ENCODE measurements at regions of chr16 and their contacts with region 1.

Region 1: DNA sequence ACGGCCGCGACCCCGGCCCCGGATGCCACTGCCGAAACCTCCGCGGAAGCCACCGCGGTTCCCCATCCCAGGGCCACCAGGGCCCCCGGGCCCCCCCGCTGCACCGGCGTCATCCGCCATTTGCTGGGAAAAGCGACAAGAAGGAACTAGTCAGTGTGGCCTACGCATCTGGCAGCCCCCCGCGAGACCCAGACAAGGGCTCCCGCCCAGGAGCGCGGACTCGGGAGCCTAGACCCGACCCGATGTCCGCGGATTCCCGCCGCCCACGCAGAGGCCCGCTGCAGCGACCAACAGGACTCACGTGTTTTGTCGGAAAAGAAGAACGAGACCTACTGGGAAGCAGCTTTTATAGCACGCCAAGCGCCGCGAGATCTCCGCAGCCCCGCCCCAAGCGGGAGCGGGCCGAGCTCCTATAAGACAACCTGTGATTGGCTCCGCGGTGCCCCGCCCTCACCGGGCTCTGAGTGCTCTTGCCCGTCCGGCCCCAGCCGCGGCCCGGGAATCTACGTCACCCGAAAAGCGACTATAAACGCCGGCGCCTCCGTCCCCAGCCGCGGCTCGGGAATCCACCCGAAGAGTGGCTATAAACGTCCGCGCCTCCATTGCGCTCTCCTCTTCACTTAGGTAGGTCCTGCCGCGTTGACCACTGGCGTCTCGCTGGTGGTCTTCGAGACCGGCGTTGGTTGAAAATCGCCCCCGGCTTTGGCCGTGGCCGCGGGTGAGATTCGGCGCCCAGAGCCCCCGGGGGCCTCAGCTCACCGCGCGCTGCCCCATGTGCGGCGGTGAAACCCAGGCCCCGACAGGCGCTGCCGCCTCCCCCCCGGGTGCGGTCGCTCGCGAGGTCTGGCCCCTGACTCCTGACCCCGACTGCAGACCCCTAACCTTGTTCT is at the start of gene RPS2:
- DNase-seq: peak; percentile 95 to 100 (median 98)
- ATAC-seq: peak; percentile 73
- H3K4me3 ChIP-seq: peak within 1 kb of the TSS; percentile 89
- H3K27ac ChIP-seq: peak within 1 kb of the TSS; percentile 85
- H3K4me1 ChIP-seq: peaks cover 8 to 50% of the 10 kb centered on the region in 2 experiments; a peak in 3 of 5 replicates
- H3K27me3 ChIP-seq: no peaks in the 10 kb centered on the region
- CTCF ChIP-seq: no peak
- EP300 ChIP-seq: no peak
- POLR2A ChIP-seq: peak; percentile 100
- RAD21 ChIP-seq: no peak
- polyA plus RNA-seq, gene RPS2: 834 to 1,305 TPM

Region 2: GRCh38 chr16:1656808-1657617 is 307.7 kb before region 1 on chr16:
- CTCF ChIA-PET with region 1: no interaction called
- POLR2A ChIA-PET with region 1: no interaction called
- in situ Hi-C with region 1: no loop called
- intact Hi-C with region 1: no loop called
- DNase-seq: peak in 2 of 4 experiments; percentile 43 to 59
- ATAC-seq: peak; percentile 56
- H3K4me3 ChIP-seq: no peak overlapping the region
- H3K27ac ChIP-seq: no peak overlapping the region; the same call in 2 of the 3 replicates
- H3K4me1 ChIP-seq: peaks cover 0 to 36% of the 10 kb centered on the region in 2 experiments; a peak in 3 of 5 replicates
- H3K27me3 ChIP-seq: no peaks in the 10 kb centered on the region
- CTCF ChIP-seq: no peak
- EP300 ChIP-seq: no peak
- POLR2A ChIP-seq: no peak
- RAD21 ChIP-seq: no peak

Region 3: GRCh38 chr16:1782352-1783091 is 182.2 kb before region 1 on chr16 and contains the starts of genes NUBP2 and SPSB3:
- CTCF ChIA-PET with region 1: no interaction called
- POLR2A ChIA-PET with region 1: interaction called, 14 read pairs
- in situ Hi-C with region 1: no loop called
- intact Hi-C with region 1: no loop called
- DNase-seq: peak; percentile 94 to 100 (median 96)
- ATAC-seq: peak; percentile 93
- H3K4me3 ChIP-seq: peak within 1 kb of the TSS; percentile 99
- H3K27ac ChIP-seq: peak within 1 kb of the TSS; percentile 78
- H3K4me1 ChIP-seq: peaks cover 4 to 84% of the 10 kb centered on the region in 2 experiments; a peak in 3 of 5 replicates
- H3K27me3 ChIP-seq: no peaks in the 10 kb centered on the region
- CTCF ChIP-seq: no peak
- EP300 ChIP-seq: no peak
- POLR2A ChIP-seq: peak; percentile 54
- RAD21 ChIP-seq: no peak
- polyA plus RNA-seq, gene NUBP2: 1.8 to 7.7 TPM
- polyA plus RNA-seq, gene SPSB3: 0.39 to 1.3 TPM

Region 4: DNA sequence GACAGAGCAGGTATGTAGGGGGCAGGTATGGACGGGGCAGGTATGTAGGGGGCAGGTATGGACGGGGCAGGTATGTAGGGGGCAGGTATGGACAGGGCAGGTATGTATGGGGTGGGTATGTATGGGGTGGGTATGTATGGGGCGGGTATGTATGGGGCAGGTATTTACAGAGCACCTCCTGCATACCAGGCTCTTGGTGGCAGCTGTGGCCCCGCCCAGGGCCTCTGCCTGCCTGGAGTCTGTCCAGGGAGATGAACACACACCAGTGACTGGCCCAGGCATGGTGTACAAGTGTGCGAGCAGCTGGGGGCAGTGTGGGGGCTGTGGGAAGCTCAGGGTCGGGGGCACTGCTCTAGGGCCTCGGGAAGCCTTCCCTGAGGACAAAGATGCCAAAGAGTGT is 14.7 kb before region 1 on chr16:
- CTCF ChIA-PET with region 1: no interaction called
- POLR2A ChIA-PET with region 1: interaction called, 37 read pairs
- in situ Hi-C with region 1: no loop called
- intact Hi-C with region 1: no loop called
- DNase-seq: no peak
- ATAC-seq: no peak
- H3K4me3 ChIP-seq: no peak overlapping the region
- H3K27ac ChIP-seq: no peak overlapping the region
- H3K4me1 ChIP-seq: peaks cover 3 to 57% of the 10 kb centered on the region in 2 experiments; a peak in 4 of 5 replicates
- H3K27me3 ChIP-seq: no peaks in the 10 kb centered on the region
- CTCF ChIP-seq: no peak
- EP300 ChIP-seq: no peak
- POLR2A ChIP-seq: no peak
- RAD21 ChIP-seq: no peak

Region 5: DNA sequence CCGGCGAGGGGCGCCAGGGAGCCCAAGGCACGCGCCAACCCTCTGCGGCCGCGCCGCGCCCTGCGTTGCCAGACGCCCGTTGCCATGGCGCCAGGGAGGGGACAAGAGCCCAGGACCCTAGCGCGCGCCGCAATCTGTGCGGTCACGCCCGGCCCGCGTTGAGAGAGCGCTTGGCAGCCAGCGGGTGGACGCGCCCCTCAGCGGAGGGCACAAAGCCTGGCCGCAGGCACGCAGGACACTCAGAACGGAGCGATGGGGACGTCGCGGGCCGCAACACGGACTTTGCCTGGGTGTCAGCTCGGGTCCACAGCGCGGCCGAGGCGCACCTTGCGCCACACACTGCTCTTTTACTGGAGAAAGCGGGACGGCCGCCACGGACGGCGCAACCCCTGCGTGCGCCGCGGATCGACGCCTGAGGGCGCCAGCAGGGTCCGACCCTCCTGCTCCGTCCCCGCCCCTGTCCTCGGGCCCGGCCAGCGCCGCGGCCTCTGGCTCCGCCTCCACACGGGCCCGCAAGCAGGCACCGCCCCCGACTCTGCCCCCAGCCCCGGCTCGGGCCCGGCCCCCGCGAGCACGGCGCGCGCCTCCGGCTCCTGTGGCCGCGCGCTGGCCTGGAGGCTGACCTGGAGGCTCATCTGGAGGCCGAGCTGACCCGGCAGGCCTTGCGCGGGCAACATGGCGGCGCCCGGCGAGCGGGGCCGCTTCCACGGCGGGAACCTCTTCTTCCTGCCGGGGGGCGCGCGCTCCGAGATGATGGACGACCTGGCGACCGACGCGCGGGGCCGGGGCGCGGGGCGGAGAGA is 19.0 kb after region 1 on chr16 and contains the start of gene GFER:
- CTCF ChIA-PET with region 1: no interaction called
- POLR2A ChIA-PET with region 1: interaction called, 103 read pairs
- in situ Hi-C with region 1: no loop called
- intact Hi-C with region 1: no loop called
- DNase-seq: peak; percentile 92 to 98 (median 94)
- ATAC-seq: peak; percentile 94
- H3K4me3 ChIP-seq: peak within 1 kb of the TSS; percentile 70
- H3K27ac ChIP-seq: peak within 1 kb of the TSS; percentile 73
- H3K4me1 ChIP-seq: peaks cover 6 to 72% of the 10 kb centered on the region in 2 experiments; a peak in 4 of 5 replicates
- H3K27me3 ChIP-seq: no peaks in the 10 kb centered on the region
- CTCF ChIP-seq: peak; percentile 46 to 80 (median 73)
- EP300 ChIP-seq: peak; percentile 35; the same call in 1 of the 2 replicates
- POLR2A ChIP-seq: peak; percentile 74
- RAD21 ChIP-seq: peak; percentile 23 to 47; a peak in 2 of 4 replicates
- polyA plus RNA-seq, gene GFER: 4.3 to 5.1 TPM

Measured in K562 (cell line).